CD8-positive, alpha-beta T cell (primary cell): ENCODE measurements at regions of chr1 and their contacts with region 1.

Region 1: DNA sequence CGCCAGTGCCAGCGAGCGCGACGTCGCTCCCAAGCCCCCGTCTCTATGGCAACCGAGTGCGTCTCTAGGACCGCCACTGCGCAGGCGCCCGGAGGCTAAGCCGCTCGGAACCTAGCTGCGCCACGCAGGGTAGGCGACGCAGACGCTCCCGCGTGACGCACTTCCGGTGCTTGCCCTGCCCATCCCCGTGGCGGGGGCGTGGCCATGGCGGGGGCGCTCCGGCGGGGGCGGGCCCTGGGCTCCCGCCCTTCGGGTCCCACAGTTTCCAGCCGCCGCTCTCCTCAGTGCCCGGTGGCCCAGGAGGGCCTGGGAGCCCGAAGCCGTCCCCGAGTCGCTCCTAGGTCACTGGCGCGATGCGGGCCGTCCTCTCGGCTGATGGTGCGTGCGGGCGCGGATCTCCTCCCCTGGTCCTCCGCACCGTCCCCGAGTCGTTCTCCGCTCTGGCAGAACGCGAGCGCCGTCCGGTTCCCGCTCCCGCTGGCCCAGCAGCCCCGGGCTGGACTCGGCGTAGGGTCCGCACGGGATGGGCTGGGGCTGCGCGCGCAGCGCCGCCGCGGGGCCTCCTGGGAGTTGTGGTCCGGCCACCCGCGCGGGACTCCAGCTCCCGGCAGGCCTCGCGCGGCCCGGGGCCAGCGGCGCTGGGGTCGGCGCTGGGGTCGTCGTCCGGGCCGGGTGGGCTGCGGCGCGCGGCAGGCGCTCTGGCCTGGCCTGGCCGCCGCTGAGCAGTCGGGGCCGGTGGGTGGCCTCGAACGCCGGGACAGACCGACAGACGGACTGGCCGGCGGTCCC is at the start of gene MIB2:
- DNase-seq: peak; percentile 94 to 100 (median 98)
- ATAC-seq: peak; percentile 82
- H3K4me3 ChIP-seq: peak within 1 kb of the TSS; percentile 91 to 100
- H3K4me3 Mint-ChIP-seq: peak within 1 kb of the TSS; percentile 90
- H3K27ac ChIP-seq: peak within 1 kb of the TSS; percentile 100
- H3K27ac Mint-ChIP-seq: peak within 1 kb of the TSS; percentile 100
- H3K4me1 ChIP-seq: peaks cover 26% of the 10 kb centered on the region
- H3K4me1 Mint-ChIP-seq: peaks cover 32% of the 10 kb centered on the region
- H3K27me3 ChIP-seq: no peaks in the 10 kb centered on the region
- H3K27me3 Mint-ChIP-seq: no peaks in the 10 kb centered on the region
- CTCF ChIP-seq: no peak
- total RNA-seq, gene MIB2: 57.0 to 57.3 TPM

Region 2: GRCh38 chr1:1406817-1407635 is 208.4 kb before region 1 on chr1 and contains the start of gene MRPL20:
- CTCF ChIA-PET with region 1: no interaction called
- POLR2A ChIA-PET with region 1: no interaction called
- intact Hi-C with region 1: loop called in 1 of 2 experiments (anchors 1 kb)
- DNase-seq: peak; percentile 89 to 98 (median 96)
- ATAC-seq: peak; percentile 95
- H3K4me3 ChIP-seq: peak within 1 kb of the TSS; percentile 79 to 87
- H3K4me3 Mint-ChIP-seq: peak within 1 kb of the TSS; percentile 94
- H3K27ac ChIP-seq: peak within 1 kb of the TSS; percentile 81 to 87
- H3K27ac Mint-ChIP-seq: peak within 1 kb of the TSS; percentile 96
- H3K4me1 ChIP-seq: peaks cover 20% of the 10 kb centered on the region
- H3K4me1 Mint-ChIP-seq: peaks cover 46% of the 10 kb centered on the region
- H3K27me3 ChIP-seq: no peaks in the 10 kb centered on the region
- H3K27me3 Mint-ChIP-seq: no peaks in the 10 kb centered on the region
- CTCF ChIP-seq: no peak
- total RNA-seq, gene MRPL20: 92.6 to 92.7 TPM

Region 3: GRCh38 chr1:1511533-1512285 is 103.7 kb before region 1 on chr1 and contains the start of gene ATAD3A:
- CTCF ChIA-PET with region 1: no interaction called
- POLR2A ChIA-PET with region 1: interaction called, 4 read pairs
- intact Hi-C with region 1: loop called in 1 of 2 experiments (anchors 10 kb)
- DNase-seq: peak; percentile 83 to 98 (median 95)
- ATAC-seq: peak; percentile 94
- H3K4me3 ChIP-seq: peak within 1 kb of the TSS; percentile 81 to 99
- H3K4me3 Mint-ChIP-seq: peak within 1 kb of the TSS; percentile 88
- H3K27ac ChIP-seq: peak within 1 kb of the TSS; percentile 90 to 97
- H3K27ac Mint-ChIP-seq: peak within 1 kb of the TSS; percentile 94
- H3K4me1 ChIP-seq: peaks cover 6% of the 10 kb centered on the region
- H3K4me1 Mint-ChIP-seq: peaks cover 11% of the 10 kb centered on the region
- H3K27me3 ChIP-seq: no peaks in the 10 kb centered on the region
- H3K27me3 Mint-ChIP-seq: no peaks in the 10 kb centered on the region
- CTCF ChIP-seq: no peak
- total RNA-seq, gene ATAD3A: 27.0 to 29.6 TPM

Region 4: DNA sequence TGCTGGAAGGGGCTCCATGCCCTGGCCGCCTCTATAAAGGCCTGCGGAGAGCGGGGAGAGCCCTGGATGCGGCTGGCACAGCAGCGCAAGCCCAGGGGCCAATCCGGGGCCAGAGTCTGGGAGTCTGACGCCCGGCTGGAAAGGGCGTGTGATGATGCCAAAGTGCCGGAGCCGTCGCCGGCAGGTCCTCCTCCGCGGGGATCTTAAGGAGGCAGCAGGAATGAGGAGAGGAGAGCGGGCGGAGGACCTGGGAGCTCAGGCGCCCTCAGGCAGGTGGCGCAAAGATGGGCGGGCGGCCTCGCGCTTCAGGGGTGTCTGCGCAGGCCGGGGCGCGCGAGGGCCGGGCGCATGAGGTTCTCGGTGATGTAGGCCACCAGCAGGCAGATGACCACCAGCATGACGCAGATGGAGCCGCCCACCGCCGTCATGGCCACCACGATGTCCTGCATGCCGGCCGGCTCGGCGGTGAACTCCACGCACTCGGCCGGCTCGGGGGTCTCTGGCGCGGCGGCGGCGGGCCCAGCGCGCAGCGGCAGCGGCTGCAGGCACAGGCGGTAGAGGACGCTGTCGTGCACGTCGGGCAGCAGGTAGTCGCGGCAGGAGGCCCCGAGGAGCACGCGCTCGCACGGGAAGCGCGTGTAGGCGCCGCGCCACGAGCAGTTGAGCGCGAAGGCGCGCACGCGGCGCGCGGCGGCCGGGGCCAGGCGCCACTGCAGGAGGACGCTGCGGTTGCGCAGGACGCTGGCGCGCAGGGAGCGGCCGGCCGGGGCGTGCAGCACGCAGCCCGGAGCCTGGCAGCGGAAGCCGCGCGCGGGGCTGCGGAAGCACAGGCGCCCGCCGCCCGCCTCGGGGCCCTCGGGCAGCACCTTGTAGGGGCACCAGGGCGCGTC is 16.2 kb before region 1 on chr1:
- CTCF ChIA-PET with region 1: no interaction called
- POLR2A ChIA-PET with region 1: interaction called, 14 read pairs
- intact Hi-C with region 1: loop called (anchors 1 to 2 kb)
- DNase-seq: peak in 5 of 9 experiments; percentile 33 to 72 (median 62)
- ATAC-seq: peak; percentile 60
- H3K4me3 ChIP-seq: no peak overlapping the region
- H3K4me3 Mint-ChIP-seq: peak overlapping the region; percentile 77
- H3K27ac ChIP-seq: no peak overlapping the region
- H3K27ac Mint-ChIP-seq: no peak overlapping the region
- H3K4me1 ChIP-seq: peaks cover 13% of the 10 kb centered on the region
- H3K4me1 Mint-ChIP-seq: peaks cover 9% of the 10 kb centered on the region
- H3K27me3 ChIP-seq: no peaks in the 10 kb centered on the region
- H3K27me3 Mint-ChIP-seq: no peaks in the 10 kb centered on the region
- CTCF ChIP-seq: no peak

Region 5: GRCh38 chr1:1605034-1605591 is 10.3 kb before region 1 on chr1:
- CTCF ChIA-PET with region 1: no interaction called
- POLR2A ChIA-PET with region 1: interaction called, 14 read pairs
- intact Hi-C with region 1: no loop called
- DNase-seq: peak in 2 of 9 experiments; percentile 18 to 25
- ATAC-seq: no peak
- H3K4me3 ChIP-seq: no peak overlapping the region
- H3K4me3 Mint-ChIP-seq: no peak overlapping the region
- H3K27ac ChIP-seq: no peak overlapping the region
- H3K27ac Mint-ChIP-seq: peak overlapping the region; percentile 49
- H3K4me1 ChIP-seq: peaks cover 18% of the 10 kb centered on the region
- H3K4me1 Mint-ChIP-seq: peaks cover 14% of the 10 kb centered on the region
- H3K27me3 ChIP-seq: no peaks in the 10 kb centered on the region
- H3K27me3 Mint-ChIP-seq: no peaks in the 10 kb centered on the region
- CTCF ChIP-seq: no peak

Region 6: DNA sequence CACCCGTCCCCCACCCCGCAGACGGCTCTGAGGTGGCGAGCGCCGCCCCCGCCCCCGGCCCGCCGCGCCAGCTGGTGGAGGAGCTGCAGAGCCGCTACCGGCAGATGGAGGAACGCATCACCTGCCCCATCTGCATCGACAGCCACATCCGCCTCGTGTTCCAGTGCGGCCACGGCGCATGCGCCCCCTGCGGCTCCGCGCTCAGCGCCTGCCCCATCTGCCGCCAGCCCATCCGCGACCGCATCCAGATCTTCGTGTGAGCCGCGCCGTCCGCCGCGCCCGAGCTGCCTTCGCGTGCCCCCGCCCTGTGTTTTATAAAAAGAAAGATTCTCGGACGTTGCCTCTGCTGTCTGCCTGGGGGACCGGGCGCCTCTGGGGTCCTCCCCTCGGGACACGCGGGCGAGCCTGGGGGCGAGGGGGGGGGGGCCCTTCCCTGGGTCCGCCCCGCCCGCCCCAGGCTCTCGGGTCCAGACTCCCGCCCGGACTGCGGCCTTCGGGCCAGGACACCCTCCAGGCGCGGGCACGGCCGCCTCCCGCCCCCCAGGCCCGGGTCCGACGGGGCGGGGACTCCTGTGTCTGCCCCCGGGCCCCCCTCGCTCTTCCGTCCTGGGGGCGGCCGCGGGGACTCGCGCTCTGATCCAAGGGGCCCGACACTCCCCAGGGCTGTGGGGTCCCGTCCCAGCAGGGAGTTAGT is 15.0 kb after region 1 on chr1:
- CTCF ChIA-PET with region 1: interaction called, 9 read pairs
- POLR2A ChIA-PET with region 1: interaction called, 112 read pairs
- intact Hi-C with region 1: loop called (anchors 1 to 2 kb)
- DNase-seq: peak; percentile 89 to 99 (median 93)
- ATAC-seq: peak; percentile 56
- H3K4me3 ChIP-seq: peak overlapping the region; percentile 45 to 53
- H3K4me3 Mint-ChIP-seq: peak overlapping the region; percentile 92
- H3K27ac ChIP-seq: peak overlapping the region; percentile 55 to 79
- H3K27ac Mint-ChIP-seq: peak overlapping the region; percentile 96
- H3K4me1 ChIP-seq: peaks cover 11% of the 10 kb centered on the region
- H3K4me1 Mint-ChIP-seq: peaks cover 10% of the 10 kb centered on the region
- H3K27me3 ChIP-seq: no peaks in the 10 kb centered on the region
- H3K27me3 Mint-ChIP-seq: no peaks in the 10 kb centered on the region
- CTCF ChIP-seq: no peak

Region 7: DNA sequence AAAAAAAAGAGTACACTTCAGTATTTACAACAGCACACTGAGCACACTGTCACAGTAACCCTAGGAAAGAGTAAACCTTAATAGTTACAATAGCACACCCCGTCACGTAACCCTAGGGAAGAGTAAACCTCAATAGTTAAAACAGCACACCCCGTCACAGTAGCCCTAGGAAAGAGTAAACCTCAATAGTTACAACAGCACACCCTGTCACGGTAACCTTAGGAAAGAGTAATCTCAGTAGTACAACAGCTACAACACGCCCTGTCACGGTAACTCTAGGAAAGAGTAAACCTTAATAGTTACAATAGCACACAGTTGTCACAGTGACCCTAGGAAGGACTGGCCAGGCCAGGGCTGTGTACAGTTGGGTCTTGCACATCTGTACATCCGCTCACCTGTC is 105.8 kb after region 1 on chr1:
- CTCF ChIA-PET with region 1: no interaction called
- POLR2A ChIA-PET with region 1: no interaction called
- intact Hi-C with region 1: loop called in 1 of 2 experiments (anchors 1 kb)
- DNase-seq: no peak
- ATAC-seq: no peak
- H3K4me3 ChIP-seq: no peak overlapping the region
- H3K4me3 Mint-ChIP-seq: peak overlapping the region; percentile 11
- H3K27ac ChIP-seq: no peak overlapping the region
- H3K27ac Mint-ChIP-seq: no peak overlapping the region
- H3K4me1 ChIP-seq: no peaks in the 10 kb centered on the region
- H3K4me1 Mint-ChIP-seq: peaks cover 10% of the 10 kb centered on the region
- H3K27me3 ChIP-seq: no peaks in the 10 kb centered on the region
- H3K27me3 Mint-ChIP-seq: no peaks in the 10 kb centered on the region
- CTCF ChIP-seq: no peak

Region 8: GRCh38 chr1:3054474-3054873 is 1439.0 kb after region 1 on chr1:
- CTCF ChIA-PET with region 1: no interaction called
- POLR2A ChIA-PET with region 1: no interaction called
- intact Hi-C with region 1: no loop called
- DNase-seq: no peak
- ATAC-seq: no peak
- H3K4me3 ChIP-seq: no peak overlapping the region
- H3K4me3 Mint-ChIP-seq: no peak overlapping the region
- H3K27ac ChIP-seq: no peak overlapping the region
- H3K27ac Mint-ChIP-seq: no peak overlapping the region
- H3K4me1 ChIP-seq: no peaks in the 10 kb centered on the region
- H3K4me1 Mint-ChIP-seq: no peaks in the 10 kb centered on the region
- H3K27me3 ChIP-seq: peaks cover 0 to 4% of the 10 kb centered on the region in 2 experiments
- H3K27me3 Mint-ChIP-seq: peaks cover 16% of the 10 kb centered on the region
- CTCF ChIP-seq: no peak